Activated naive CD4-positive, alpha-beta T cell treated with anti-CD3 and anti-CD28 coated beads for 36 hours (primary cell): ENCODE measurements at regions of chr17 and their contacts with region 1.

Region 1: DNA sequence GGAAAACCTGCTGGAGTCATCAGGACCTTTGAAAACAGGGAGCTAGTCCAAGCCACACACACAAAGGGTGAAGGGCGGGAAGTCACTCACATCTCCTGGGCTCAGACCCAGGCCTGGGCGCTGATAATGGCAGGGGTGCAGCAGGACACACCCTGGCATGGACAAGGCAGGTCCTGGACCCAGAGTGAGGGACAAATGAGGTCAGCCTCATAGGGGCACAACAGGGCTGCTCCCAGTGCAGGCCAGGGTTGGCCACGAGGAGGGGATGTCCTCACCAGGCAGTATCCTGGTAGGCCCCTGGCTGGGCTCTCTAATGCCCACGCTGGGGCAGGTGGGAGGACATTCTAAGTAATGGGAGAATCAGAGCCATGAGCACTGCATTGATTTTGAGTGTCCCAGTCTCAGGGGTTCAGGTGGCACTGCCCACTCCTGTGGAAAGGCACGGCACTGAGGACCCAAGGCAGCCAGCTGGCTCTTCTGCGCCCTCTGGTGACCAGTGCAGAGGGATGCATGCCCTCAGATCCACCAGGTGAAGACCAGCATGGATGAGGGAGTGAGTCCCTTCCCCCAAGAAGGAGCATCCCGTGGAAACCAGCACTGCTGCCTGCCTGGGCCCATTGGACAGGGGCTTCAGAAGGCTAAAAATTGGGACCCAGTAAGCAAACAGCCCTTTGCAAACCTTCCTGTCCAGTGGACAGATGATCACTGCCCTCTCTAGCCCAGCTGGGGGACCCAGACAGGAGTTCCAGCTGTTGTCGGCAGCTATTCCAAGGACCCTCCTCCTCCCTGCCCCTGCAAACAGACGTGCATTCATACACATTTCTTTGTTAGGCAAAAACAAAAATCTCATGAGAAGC is 23.4 kb upstream of the SREBF1 start:
- DNase-seq: peak; percentile 80
- H3K4me3 Mint-ChIP-seq: no peak overlapping the region
- H3K27ac Mint-ChIP-seq: no peak overlapping the region
- H3K4me1 Mint-ChIP-seq: peaks cover 26% of the 10 kb centered on the region
- H3K27me3 Mint-ChIP-seq: no peaks in the 10 kb centered on the region

Region 2: DNA sequence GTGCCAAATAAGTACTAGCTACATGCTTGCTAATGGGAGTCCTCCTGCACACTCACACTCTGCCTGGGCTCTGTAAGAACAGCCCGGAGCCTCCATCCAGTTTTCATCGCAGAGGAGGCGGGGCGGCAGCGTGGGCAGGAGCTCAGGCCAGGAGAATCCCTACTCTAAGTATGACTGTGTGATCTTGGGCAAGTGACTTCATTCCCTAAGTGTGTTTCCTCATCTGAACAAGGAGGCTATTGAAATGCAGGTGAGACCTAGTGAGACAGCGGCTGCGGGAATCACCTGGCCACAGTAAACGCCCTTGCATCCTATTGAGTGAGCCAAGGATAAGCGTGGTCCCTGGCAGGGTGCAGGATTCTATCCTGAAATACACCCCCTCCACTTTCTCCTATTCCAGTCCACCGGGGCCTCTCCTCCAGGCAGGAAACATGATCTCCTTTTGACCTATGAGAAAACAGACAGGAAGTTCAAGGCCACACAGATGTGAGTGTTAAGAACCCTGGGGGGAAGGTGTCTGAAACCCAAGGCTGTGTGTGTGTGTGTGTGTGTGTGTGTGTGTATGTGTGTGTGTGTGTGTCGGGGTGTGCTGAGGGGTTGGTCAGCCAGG is 184.1 kb before region 1 on chr17:
- CTCF ChIA-PET with region 1: interaction called, 23 read pairs
- intact Hi-C with region 1: loop called (anchors 1 kb)
- DNase-seq: peak; percentile 52
- H3K4me3 Mint-ChIP-seq: no peak overlapping the region
- H3K27ac Mint-ChIP-seq: no peak overlapping the region
- H3K4me1 Mint-ChIP-seq: peaks cover 26% of the 10 kb centered on the region
- H3K27me3 Mint-ChIP-seq: no peaks in the 10 kb centered on the region

Region 3: DNA sequence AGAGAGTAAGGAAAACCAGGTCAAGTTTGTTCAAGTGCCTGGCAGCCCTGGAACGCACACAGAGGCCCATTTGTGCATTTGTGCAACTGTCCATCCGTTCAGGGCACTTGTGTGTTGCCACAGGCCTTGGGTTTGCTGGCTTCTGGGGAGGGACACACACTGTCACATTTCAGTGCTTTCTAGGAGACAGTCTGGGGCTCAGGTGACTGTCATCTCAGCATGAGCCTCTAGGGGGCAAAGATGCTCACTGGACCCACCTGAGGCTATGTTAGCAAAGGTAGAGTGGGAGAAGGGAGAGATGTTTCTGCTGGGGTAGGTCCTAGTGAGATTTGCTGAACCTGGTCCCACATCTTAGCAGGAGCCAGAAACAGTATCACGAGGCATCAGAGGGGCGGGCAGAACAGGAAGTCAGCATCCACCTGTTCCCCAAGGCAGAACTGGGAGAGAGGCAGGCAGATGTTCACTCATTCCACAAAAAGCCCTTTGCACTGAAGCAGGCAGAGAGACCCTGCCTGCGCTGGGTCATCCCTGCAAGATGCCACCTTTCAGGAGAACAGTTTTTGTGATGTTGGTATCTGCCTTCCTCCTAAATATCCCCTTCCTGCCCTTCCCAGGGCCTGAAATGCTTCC is 130.4 kb before region 1 on chr17:
- CTCF ChIA-PET with region 1: interaction called, 3 read pairs
- intact Hi-C with region 1: loop called (anchors 1 kb)
- DNase-seq: peak; percentile 78
- H3K4me3 Mint-ChIP-seq: no peak overlapping the region
- H3K27ac Mint-ChIP-seq: no peak overlapping the region
- H3K4me1 Mint-ChIP-seq: peaks cover 21% of the 10 kb centered on the region
- H3K27me3 Mint-ChIP-seq: no peaks in the 10 kb centered on the region

Region 4: GRCh38 chr17:17792551-17793377 is 67.4 kb before region 1 on chr17:
- CTCF ChIA-PET with region 1: interaction called, 3 read pairs
- intact Hi-C with region 1: loop called (anchors 2 kb)
- DNase-seq: peak; percentile 82
- H3K4me3 Mint-ChIP-seq: no peak overlapping the region
- H3K27ac Mint-ChIP-seq: peak overlapping the region; percentile 37
- H3K4me1 Mint-ChIP-seq: peaks cover 20% of the 10 kb centered on the region
- H3K27me3 Mint-ChIP-seq: no peaks in the 10 kb centered on the region

Region 5: DNA sequence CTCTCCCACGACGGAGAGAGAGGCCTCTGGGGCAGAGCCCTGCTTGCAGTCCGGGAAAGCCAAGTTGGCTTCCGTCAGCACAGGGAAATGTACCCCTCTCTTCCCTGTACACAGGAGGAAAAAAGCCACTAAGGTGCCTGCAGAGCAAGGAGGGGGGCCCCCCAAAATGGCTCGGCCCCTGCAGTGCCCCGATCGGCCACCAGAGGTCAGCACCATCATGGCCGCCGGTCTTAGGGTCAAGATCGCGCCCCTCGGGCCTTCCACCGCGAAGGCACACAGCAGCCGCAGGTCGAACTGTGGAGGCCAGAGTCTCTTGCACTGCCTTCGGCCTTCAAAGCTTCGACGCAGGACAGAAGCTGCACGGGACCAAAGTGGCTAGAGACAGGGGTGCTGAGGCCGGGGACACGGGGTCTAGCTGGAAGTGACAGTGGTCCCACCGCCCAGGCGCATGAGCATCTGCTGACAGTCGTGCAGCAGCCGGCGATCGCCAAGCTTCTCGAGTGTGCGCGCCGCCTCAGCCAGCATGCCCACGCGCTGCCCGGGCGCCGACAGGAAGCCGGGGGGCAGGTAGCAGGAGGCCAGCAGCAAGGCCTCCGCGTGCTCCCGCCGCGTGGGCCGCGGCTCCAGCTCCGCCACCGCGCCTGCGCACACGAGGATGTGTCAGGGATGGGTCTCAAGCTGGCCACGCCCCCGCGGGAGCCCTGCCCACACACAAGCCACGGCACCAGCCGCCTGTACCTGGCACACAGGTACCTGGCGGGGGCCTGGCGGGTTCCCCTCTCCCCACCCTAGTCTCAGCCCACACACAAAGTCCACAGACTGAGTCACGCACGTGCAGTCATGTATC is 47.7 kb before region 1 on chr17:
- CTCF ChIA-PET with region 1: interaction called, 76 read pairs
- intact Hi-C with region 1: loop called (anchors 1 kb)
- DNase-seq: peak; percentile 72
- H3K4me3 Mint-ChIP-seq: no peak overlapping the region
- H3K27ac Mint-ChIP-seq: peak overlapping the region; percentile 18
- H3K4me1 Mint-ChIP-seq: peaks cover 10% of the 10 kb centered on the region
- H3K27me3 Mint-ChIP-seq: no peaks in the 10 kb centered on the region